CD4-positive, alpha-beta T cell (primary cell): ENCODE measurements at regions of chrX and their contacts with region 1.

Region 1: GRCh38 chrX:46758906-46759644 is at the start of gene SLC9A7:
- DNase-seq: peak; percentile 54 to 84 (median 74)
- ATAC-seq: peak; percentile 82
- H3K4me3 ChIP-seq: peak within 1 kb of the TSS; percentile 65
- H3K4me3 Mint-ChIP-seq: peak within 1 kb of the TSS; percentile 92
- H3K27ac ChIP-seq: no peak within 1 kb of the TSS
- H3K27ac Mint-ChIP-seq: peak within 1 kb of the TSS; percentile 77
- H3K4me1 ChIP-seq: peaks cover 13% of the 10 kb centered on the region
- H3K4me1 Mint-ChIP-seq: peaks cover 22% of the 10 kb centered on the region
- H3K27me3 ChIP-seq: no peaks in the 10 kb centered on the region
- H3K27me3 Mint-ChIP-seq: peaks cover 4% of the 10 kb centered on the region
- CTCF ChIP-seq: peak; percentile 62
- total RNA-seq, gene SLC9A7: 2.2 to 3.2 TPM

Region 2: GRCh38 chrX:46561824-46562657 is 197.0 kb before region 1 on chrX:
- CTCF ChIA-PET with region 1: no interaction called
- POLR2A ChIA-PET with region 1: no interaction called
- intact Hi-C with region 1: no loop called
- DNase-seq: peak in 1 of 14 experiments; percentile 19
- ATAC-seq: no peak
- H3K4me3 ChIP-seq: no peak overlapping the region
- H3K4me3 Mint-ChIP-seq: no peak overlapping the region
- H3K27ac ChIP-seq: no peak overlapping the region
- H3K27ac Mint-ChIP-seq: no peak overlapping the region
- H3K4me1 ChIP-seq: no peaks in the 10 kb centered on the region
- H3K4me1 Mint-ChIP-seq: no peaks in the 10 kb centered on the region
- H3K27me3 ChIP-seq: no peaks in the 10 kb centered on the region
- H3K27me3 Mint-ChIP-seq: no peaks in the 10 kb centered on the region
- CTCF ChIP-seq: no peak

Region 3: DNA sequence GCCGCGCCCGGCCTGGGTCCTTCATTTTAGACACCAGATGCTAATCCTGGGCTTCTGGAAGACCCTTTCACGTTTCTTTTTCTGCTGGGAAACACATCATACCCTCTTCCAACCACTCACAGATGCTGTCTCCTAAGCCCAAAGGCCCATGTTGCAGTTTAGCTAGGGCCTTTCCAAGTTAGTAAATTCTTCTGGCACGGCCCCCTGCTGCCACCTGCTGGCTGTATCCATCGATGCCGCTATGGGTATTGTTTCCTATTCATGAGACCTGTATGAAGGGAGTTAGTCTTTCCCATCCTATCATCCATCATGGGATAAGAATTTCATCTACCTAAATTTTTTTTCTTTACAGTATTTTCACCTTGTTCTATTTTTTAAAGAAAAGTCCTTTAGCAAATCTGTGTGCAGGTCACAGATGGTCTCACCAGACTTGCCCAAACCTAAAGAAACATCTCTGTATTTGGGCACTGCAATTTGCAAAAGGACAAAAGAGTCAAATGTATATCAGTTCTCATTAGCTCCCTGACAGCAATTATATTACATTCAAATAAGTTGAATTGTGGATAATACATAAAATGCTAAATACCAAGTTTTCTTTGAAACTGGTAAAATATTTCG is 37.6 kb after region 1 on chrX:
- CTCF ChIA-PET with region 1: interaction called, 12 read pairs
- POLR2A ChIA-PET with region 1: no interaction called
- intact Hi-C with region 1: loop called (anchors 1 kb)
- DNase-seq: peak; percentile 42 to 77 (median 60)
- ATAC-seq: peak; percentile 51
- H3K4me3 ChIP-seq: no peak overlapping the region
- H3K4me3 Mint-ChIP-seq: no peak overlapping the region
- H3K27ac ChIP-seq: no peak overlapping the region
- H3K27ac Mint-ChIP-seq: no peak overlapping the region
- H3K4me1 ChIP-seq: peaks cover 2% of the 10 kb centered on the region
- H3K4me1 Mint-ChIP-seq: peaks cover 9% of the 10 kb centered on the region
- H3K27me3 ChIP-seq: no peaks in the 10 kb centered on the region
- H3K27me3 Mint-ChIP-seq: no peaks in the 10 kb centered on the region
- CTCF ChIP-seq: peak; percentile 68

Region 4: DNA sequence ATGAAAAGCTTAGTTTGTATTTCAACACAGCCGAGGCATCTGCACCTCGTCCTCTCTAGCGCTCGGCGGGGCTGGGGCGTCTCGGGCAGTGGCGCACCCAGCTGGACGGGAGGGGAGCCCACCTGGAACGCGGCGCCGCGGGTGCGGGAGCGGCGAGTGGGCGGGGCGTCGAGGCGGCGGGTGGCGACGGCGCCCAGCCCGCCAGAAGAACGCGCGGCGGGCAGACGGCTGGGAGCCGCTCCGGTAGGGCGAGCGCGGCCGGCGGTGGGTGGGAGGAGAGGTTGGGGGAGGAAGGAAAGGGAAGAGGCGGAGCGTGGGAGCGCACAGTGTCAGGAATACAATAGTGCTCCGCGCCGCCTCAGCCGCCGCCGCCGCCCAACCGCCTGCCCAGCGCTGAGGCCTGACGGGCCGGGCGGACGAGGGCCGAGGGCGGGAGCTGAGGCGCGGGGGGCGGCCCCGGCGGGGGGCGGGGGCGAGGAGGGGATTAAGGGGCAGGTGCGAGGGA is 153.1 kb after region 1 on chrX and contains the start of gene JADE3:
- CTCF ChIA-PET with region 1: no interaction called
- POLR2A ChIA-PET with region 1: interaction called, 4 read pairs
- intact Hi-C with region 1: loop called in 1 of 2 experiments (anchors 5 kb)
- DNase-seq: peak in 10 of 14 experiments; percentile 1 to 60 (median 19)
- ATAC-seq: peak; percentile 63
- H3K4me3 ChIP-seq: peak within 1 kb of the TSS; percentile 55
- H3K4me3 Mint-ChIP-seq: peak within 1 kb of the TSS; percentile 83
- H3K27ac ChIP-seq: no peak within 1 kb of the TSS
- H3K27ac Mint-ChIP-seq: no peak within 1 kb of the TSS
- H3K4me1 ChIP-seq: peaks cover 9% of the 10 kb centered on the region
- H3K4me1 Mint-ChIP-seq: peaks cover 11% of the 10 kb centered on the region
- H3K27me3 ChIP-seq: peaks cover 9 to 26% of the 10 kb centered on the region in 2 experiments
- H3K27me3 Mint-ChIP-seq: peaks cover 34% of the 10 kb centered on the region
- CTCF ChIP-seq: no peak
- total RNA-seq, gene JADE3: 0.05 to 0.20 TPM

Region 5: GRCh38 chrX:46978341-46979291 is 219.5 kb after region 1 on chrX:
- CTCF ChIA-PET with region 1: no interaction called
- POLR2A ChIA-PET with region 1: no interaction called
- intact Hi-C with region 1: loop called in 1 of 2 experiments (anchors 2 kb)
- DNase-seq: peak; percentile 37 to 80 (median 60)
- ATAC-seq: no peak
- H3K4me3 ChIP-seq: no peak overlapping the region
- H3K4me3 Mint-ChIP-seq: no peak overlapping the region
- H3K27ac ChIP-seq: no peak overlapping the region
- H3K27ac Mint-ChIP-seq: no peak overlapping the region
- H3K4me1 ChIP-seq: no peaks in the 10 kb centered on the region
- H3K4me1 Mint-ChIP-seq: no peaks in the 10 kb centered on the region
- H3K27me3 ChIP-seq: no peaks in the 10 kb centered on the region
- H3K27me3 Mint-ChIP-seq: no peaks in the 10 kb centered on the region
- CTCF ChIP-seq: peak; percentile 40

Region 6: DNA sequence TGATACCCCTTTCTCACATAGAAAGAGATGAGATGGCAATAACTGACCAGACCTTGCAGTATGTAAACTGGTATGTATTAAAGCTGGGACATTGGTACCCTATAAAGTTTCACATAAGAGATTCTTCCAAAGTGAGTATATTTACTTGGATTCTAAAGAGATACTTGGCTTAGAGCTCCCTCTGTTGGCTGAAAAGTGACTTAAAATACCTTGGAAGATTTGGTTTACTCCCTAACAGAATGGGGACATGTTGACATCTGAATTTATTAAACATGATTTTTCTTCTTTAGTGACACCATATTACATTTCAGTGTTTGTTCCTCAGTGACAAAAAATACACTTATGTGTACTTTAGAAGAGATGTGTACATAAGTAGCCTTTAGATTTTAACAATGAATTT is 271.3 kb after region 1 on chrX:
- CTCF ChIA-PET with region 1: no interaction called
- POLR2A ChIA-PET with region 1: no interaction called
- intact Hi-C with region 1: loop called in 1 of 2 experiments (anchors 1 kb)
- DNase-seq: peak in 4 of 14 experiments; percentile 27 to 60 (median 52)
- ATAC-seq: no peak
- H3K4me3 ChIP-seq: no peak overlapping the region
- H3K4me3 Mint-ChIP-seq: no peak overlapping the region
- H3K27ac ChIP-seq: no peak overlapping the region
- H3K27ac Mint-ChIP-seq: no peak overlapping the region
- H3K4me1 ChIP-seq: no peaks in the 10 kb centered on the region
- H3K4me1 Mint-ChIP-seq: no peaks in the 10 kb centered on the region
- H3K27me3 ChIP-seq: no peaks in the 10 kb centered on the region
- H3K27me3 Mint-ChIP-seq: no peaks in the 10 kb centered on the region
- CTCF ChIP-seq: peak; percentile 65

Region 7: DNA sequence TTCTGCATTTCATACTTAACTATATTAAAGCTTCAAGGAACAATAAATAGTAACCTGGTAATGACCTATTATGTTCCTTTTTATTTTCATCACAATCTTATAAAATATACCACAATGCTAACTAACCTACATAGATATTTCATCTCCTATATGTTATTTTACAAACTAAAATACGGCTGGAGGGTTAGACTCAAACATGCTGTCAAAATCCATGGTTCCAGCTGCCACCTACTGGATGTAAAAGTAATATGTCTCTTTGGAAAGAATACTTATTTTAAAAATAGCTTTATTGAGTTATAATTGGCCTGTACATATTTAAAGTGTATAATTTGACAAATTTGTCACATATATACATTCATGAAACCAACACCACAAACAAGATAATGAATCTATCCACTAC is 334.2 kb after region 1 on chrX:
- CTCF ChIA-PET with region 1: no interaction called
- POLR2A ChIA-PET with region 1: interaction called, 4 read pairs
- intact Hi-C with region 1: loop called in 1 of 2 experiments (anchors 5 kb)
- DNase-seq: peak in 4 of 14 experiments; percentile 7 to 35 (median 22)
- ATAC-seq: no peak
- H3K4me3 ChIP-seq: no peak overlapping the region
- H3K4me3 Mint-ChIP-seq: no peak overlapping the region
- H3K27ac ChIP-seq: no peak overlapping the region
- H3K27ac Mint-ChIP-seq: no peak overlapping the region
- H3K4me1 ChIP-seq: no peaks in the 10 kb centered on the region
- H3K4me1 Mint-ChIP-seq: peaks cover 16% of the 10 kb centered on the region
- H3K27me3 ChIP-seq: no peaks in the 10 kb centered on the region
- H3K27me3 Mint-ChIP-seq: no peaks in the 10 kb centered on the region
- CTCF ChIP-seq: peak; percentile 39